GM13976 (cell line): ENCODE measurements at regions of chr1 and their contacts with region 1.

Region 1: DNA sequence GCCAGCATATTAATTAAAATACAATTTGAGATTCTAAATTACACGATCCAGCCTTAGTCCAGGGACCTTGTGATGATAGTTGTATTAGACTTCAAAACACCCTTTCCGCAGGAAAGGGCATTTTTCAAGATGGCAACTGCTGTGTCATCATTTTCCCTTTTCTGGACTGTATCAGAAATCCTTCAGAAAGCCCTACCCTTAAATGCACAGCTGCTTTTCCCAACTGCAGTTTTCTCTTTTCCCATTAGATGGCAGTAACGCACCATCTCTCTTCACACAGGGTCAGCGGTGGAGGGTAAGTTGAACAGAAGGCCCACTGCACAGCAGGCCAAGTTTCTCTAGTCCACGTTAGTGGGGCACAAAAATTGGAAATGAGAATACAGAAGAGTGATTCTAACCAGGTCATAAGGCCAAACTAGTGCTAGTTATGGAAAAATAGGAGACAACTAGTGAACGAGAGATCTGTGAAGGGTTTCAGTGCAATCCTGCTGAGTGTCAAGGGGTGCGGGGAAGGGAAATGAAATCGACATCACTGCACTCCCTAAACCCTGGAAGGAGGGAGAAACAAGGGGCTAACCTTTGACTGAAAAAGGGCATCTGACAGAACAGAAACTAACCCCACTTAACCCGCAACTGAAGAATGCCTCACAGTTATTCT is 22.1 kb upstream of the TDRD10 start:
- DNase-seq: peak; percentile 78
- CTCF ChIP-seq: peak; percentile 76

Region 2: DNA sequence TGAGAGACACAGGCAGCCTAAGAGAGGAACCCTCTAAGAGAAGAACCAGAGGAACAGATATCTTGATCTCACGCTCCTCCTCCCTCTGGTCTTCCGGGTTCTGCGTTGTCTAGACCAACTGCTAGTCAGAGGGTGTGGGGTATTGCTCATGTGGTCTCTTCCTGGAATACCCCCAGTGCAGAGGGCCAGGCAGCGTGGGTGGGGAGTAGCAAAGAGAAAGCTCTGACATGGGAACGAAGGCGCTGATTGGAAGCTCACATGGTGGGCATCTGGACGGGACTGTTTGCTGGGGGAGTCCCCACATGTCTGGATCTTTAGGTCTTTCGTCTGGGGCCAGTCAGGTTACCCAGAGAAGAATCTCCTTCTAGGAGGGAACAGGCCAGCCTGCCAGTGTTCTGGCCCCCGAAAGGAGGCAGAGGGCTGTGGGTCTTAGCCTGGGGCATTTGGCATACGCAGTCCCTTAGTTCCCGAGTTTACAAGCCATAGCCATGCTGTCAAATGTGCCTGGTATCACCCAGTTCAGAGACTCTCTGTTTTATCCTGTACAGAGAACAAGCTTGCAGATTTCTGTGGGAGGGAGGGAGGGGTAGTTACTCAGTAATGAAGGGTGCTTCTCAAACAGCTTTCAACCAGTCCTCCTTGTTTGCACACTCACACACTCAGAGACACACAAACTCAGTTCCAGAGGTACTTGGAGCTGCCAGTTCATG is 93.1 kb before region 1 on chr1:
- in situ Hi-C with region 1: no loop called
- DNase-seq: peak; percentile 73
- CTCF ChIP-seq: no peak

Region 3: DNA sequence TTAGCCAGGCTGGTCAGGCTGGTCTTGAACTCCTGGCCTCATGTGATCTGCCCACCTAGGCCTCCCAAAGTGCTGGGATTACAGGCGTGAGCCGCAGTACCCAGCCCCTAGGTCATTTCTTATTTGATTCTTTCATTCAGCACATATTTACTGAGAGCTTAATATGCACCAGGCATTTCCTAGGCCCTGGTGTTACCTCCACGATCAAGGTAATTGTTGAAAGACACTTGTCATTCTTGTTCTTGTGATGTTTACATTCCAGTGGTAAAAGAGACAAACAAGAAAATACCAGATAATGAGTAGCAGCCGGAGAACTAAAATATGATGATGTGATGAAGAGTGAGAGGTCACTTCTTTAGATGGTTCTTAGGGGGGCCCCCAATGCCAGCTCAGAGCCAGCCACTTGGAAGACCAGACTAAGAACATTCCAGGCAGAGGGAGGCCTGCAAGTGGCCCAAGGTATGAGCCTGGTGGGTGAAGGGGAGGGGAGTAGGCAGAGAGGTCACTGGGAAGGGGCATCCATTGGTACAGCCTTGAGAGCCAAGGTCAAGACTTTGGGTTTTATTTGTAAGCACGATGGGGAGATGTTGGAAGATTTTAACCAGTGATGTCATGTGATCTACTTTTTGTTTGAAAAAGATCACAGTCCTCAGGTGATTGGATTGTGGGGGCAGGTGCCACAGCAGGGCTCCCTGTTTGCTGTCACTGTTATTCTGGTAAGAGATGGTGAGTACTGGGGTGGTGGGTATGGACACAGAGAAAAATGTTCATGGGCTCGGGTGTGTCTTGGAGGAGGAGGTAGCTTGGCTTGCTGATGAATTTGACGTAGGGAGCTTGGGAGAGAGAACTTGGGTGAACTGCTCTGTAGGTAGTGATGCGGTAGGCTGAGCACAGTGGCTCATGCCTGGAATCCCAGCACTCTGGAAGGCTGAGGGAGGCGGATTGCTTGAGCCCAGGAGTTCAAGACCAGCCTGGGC is 59.9 kb after region 1 on chr1:
- in situ Hi-C with region 1: loop called (anchors 5 kb)
- DNase-seq: no peak
- CTCF ChIP-seq: no peak